SK-N-SH (cell line): ENCODE measurements at regions of chr17 and their contacts with region 1.

Region 1: DNA sequence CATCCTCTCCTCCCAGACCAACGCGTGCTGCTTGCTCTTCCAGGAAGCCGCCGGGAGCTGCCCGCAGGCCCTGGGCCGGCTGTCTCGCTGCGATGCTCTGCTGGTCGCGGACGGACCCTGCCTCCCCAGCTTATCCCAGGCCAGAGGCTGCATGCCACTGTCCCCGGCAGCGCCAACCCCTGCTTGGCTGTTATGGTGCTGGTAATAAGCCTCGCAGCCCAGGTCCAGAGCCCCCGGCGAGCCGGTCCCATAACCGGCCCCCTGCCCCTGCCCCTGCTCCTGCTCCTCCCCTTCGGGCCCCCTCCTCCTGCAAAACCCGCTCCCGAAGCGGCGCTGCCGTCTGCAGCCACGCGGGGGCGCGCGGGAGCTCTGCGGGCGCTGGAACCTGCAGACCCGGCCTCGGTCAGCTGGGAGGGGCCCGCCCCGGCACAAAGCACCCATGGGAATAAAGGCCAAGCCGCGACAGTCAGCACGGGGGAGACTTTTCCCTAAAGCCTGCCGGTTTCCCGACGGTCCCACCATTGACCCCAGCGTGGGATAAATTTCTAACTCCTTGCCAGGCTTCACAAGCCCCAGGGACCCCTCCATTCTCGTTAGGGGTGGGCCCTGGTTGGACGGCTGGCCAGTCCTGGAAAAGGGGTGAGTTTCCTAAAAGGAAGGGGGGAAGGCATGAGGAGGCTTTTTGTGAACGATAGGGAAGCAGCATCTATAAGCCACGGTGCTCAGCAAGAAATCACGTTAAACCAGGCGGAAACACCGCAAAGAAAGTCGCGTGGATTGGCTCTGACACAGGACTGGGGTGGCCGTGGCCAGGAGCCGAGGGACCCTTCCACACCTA is 11.2 kb downstream of the ENPP7 start:
- DNase-seq: peak; percentile 99
- H3K4me3 ChIP-seq: peak overlapping the region; percentile 50 to 55; a peak in 3 of 4 replicates
- H3K27ac ChIP-seq: peak overlapping the region in 1 of 2 experiments; percentile 29; a peak in 1 of 4 replicates
- H3K4me1 ChIP-seq: peaks cover 0 to 12% of the 10 kb centered on the region in 2 experiments; a peak in 1 of 4 replicates
- H3K27me3 ChIP-seq: peaks cover 42% of the 10 kb centered on the region
- CTCF ChIP-seq: peak; percentile 99
- EP300 ChIP-seq: no peak
- RAD21 ChIP-seq: peak; percentile 75

Region 2: DNA sequence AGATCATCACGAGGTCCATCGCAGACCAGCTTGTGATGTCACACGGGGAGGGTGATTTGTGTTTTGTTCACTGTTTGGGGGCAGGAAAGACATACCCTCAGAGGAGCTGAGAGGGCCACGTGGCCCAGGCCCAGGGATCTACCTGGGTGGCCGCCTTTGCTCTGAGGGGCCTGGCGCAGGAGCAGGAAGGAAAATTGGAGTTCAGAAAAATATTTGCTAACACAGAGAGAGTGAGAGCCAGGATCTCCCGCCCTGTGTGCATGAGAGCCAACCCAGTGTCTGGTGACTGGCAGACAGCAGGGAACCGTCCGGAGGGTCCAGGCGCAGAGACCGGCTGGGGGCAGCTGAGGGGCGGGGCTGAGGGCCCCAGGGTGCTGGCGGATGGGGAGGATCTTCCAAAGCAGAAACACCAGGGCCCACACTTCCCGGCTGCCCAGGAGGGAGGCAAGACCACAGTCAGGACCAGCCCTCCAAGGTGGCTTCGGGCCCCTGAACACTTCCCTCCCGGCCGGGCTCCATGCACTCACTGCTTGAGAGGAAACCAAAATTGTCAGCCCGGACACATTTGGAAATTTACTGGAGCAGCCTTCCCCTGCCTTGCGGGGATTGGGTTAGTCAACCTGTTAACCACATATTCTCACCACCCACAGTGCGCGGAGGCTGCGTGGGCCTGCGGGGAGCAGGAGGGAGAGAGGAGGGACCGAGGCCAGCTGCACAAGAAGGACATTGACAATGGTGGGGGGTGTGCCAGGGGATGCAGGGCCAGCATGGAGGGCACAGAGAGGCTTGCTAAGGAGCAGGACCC is 183.7 kb before region 1 on chr17:
- CTCF ChIA-PET with region 1: no interaction called
- POLR2A ChIA-PET with region 1: no interaction called
- DNase-seq: no peak
- H3K4me3 ChIP-seq: no peak overlapping the region
- H3K27ac ChIP-seq: no peak overlapping the region
- H3K4me1 ChIP-seq: peaks cover 0 to 17% of the 10 kb centered on the region in 2 experiments; a peak in 1 of 4 replicates
- H3K27me3 ChIP-seq: peaks cover 17% of the 10 kb centered on the region; the same call in 1 of the 2 replicates
- CTCF ChIP-seq: no peak
- EP300 ChIP-seq: no peak
- RAD21 ChIP-seq: no peak

Region 3: DNA sequence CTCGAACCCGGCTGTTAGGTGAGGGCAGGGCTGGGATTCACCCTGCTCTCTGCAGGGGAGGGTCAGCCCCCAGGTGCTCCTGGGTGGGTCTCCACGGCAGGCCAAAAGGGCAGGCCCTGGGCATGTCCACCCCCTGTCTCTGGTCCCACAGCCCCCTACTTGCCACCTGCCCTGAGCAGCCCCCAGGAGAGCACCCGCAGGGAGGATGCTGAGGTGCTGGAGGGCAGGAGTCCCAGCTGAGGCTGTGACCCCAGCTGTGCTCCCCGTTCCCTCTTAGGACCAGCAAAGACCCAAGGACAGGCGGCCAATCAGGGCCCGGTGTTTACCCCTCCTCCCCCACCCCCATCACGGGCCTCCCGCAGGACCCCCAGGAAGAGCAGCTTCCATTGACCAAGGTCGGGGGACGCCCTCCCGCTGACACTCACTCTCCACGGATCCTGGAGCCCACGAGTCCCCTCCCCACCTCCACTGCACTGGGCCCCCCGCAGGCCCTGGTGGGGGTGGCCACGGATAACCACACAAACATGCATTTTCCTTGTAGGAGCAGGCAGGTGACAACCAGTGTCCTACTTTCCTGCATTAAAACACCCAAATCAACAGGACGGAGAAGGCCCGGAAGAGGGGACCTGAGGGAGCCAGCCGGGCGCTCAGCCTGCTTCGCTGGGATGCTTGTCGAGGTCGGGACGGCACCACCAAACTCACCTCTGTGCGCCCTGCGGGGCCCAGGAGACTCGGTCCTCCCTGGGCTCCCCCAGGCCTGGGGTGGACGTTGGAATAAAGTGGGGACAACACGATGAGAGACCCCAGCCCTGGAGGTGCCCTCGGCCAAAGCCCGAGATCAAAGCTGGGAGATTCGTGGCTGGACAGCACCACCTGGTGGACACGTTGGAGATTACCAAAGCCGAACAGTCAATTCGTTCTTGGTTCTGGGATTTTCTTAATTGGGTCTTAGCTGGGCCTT is 33.8 kb before region 1 on chr17:
- CTCF ChIA-PET with region 1: interaction called, 11 read pairs
- POLR2A ChIA-PET with region 1: no interaction called
- DNase-seq: peak; percentile 89
- H3K4me3 ChIP-seq: no peak overlapping the region
- H3K27ac ChIP-seq: no peak overlapping the region
- H3K4me1 ChIP-seq: no peaks in the 10 kb centered on the region
- H3K27me3 ChIP-seq: no peaks in the 10 kb centered on the region
- CTCF ChIP-seq: peak; percentile 83
- EP300 ChIP-seq: no peak
- RAD21 ChIP-seq: peak; percentile 92

Region 4: GRCh38 chr17:79760197-79760906 is 18.4 kb after region 1 on chr17:
- CTCF ChIA-PET with region 1: interaction called, 23 read pairs
- POLR2A ChIA-PET with region 1: no interaction called
- DNase-seq: no peak
- H3K4me3 ChIP-seq: no peak overlapping the region
- H3K27ac ChIP-seq: no peak overlapping the region
- H3K4me1 ChIP-seq: no peaks in the 10 kb centered on the region
- H3K27me3 ChIP-seq: peaks cover 3% of the 10 kb centered on the region; the same call in 1 of the 2 replicates
- CTCF ChIP-seq: no peak
- EP300 ChIP-seq: no peak
- RAD21 ChIP-seq: no peak

Region 5: DNA sequence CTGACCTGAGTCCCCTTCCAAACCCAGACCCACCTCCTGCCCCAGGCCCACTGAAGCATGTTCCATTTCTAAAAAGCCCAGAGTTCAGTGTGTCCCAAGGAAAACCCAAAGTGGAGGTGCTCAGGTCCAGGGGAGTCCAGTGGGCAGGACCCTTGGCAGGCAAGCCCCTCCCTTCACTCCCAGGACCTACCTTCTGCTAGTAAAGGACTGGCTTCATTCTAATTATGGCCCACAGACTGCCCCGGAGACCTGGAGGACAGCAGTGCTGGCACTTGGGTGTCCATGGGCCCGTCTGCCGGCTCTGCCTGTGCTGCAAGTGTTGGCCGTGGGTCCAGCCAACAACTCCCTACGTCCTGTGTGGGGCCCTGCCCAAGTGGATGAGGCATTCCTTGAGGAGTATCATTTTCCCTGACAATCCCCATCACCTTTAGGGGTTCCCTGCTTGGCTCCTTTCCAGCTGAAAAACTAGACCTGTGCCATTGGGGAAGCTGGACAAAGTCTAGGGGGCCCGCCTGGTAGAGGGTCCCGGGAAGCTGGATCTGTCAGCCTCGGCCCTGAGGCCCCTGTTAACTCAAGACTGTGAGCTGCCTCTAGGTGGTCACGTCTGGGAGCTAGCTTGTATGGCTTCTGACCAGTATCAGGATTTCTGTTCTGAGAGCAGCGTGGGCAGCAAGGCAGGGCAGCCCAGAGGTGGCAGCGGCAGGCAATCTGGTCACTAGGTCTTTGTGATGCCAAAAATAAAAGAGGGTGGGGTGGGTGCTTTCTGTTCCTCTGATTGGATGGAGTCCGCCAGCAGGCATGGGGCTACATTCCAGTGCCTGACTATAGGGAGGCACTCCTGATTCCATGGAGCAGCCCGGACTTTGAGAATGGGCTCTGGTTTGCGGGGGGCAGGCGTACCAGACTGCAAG is 44.2 kb after region 1 on chr17:
- CTCF ChIA-PET with region 1: interaction called, 10 read pairs
- POLR2A ChIA-PET with region 1: interaction called, 4 read pairs
- DNase-seq: no peak
- H3K4me3 ChIP-seq: no peak overlapping the region
- H3K27ac ChIP-seq: peak overlapping the region in 1 of 2 experiments; percentile 47; a peak in 1 of 4 replicates
- H3K4me1 ChIP-seq: peaks cover 0 to 32% of the 10 kb centered on the region in 2 experiments; a peak in 2 of 4 replicates
- H3K27me3 ChIP-seq: no peaks in the 10 kb centered on the region
- CTCF ChIP-seq: no peak
- EP300 ChIP-seq: no peak
- RAD21 ChIP-seq: no peak

Region 6: GRCh38 chr17:79831367-79832210 is 89.6 kb after region 1 on chr17:
- CTCF ChIA-PET with region 1: interaction called, 42 read pairs
- POLR2A ChIA-PET with region 1: no interaction called
- DNase-seq: peak; percentile 87
- H3K4me3 ChIP-seq: no peak overlapping the region
- H3K27ac ChIP-seq: peak overlapping the region in 1 of 2 experiments; percentile 77; a peak in 1 of 4 replicates
- H3K4me1 ChIP-seq: peaks cover 5 to 41% of the 10 kb centered on the region in 2 experiments; a peak in 2 of 4 replicates
- H3K27me3 ChIP-seq: no peaks in the 10 kb centered on the region
- CTCF ChIP-seq: no peak
- EP300 ChIP-seq: no peak
- RAD21 ChIP-seq: no peak

Region 7: GRCh38 chr17:79991140-79991923 is 249.4 kb after region 1 on chr17:
- CTCF ChIA-PET with region 1: interaction called, 36 read pairs
- POLR2A ChIA-PET with region 1: no interaction called
- DNase-seq: peak; percentile 100
- H3K4me3 ChIP-seq: no peak overlapping the region
- H3K27ac ChIP-seq: no peak overlapping the region; a peak in 1 of 4 replicates
- H3K4me1 ChIP-seq: peaks cover 21 to 40% of the 10 kb centered on the region in 2 experiments; a peak in 3 of 4 replicates
- H3K27me3 ChIP-seq: no peaks in the 10 kb centered on the region
- CTCF ChIP-seq: peak; percentile 46
- EP300 ChIP-seq: no peak
- RAD21 ChIP-seq: peak; percentile 78